ENCODE measurements at regions of chr4 and their contacts with region 1.

Region 1: DNA sequence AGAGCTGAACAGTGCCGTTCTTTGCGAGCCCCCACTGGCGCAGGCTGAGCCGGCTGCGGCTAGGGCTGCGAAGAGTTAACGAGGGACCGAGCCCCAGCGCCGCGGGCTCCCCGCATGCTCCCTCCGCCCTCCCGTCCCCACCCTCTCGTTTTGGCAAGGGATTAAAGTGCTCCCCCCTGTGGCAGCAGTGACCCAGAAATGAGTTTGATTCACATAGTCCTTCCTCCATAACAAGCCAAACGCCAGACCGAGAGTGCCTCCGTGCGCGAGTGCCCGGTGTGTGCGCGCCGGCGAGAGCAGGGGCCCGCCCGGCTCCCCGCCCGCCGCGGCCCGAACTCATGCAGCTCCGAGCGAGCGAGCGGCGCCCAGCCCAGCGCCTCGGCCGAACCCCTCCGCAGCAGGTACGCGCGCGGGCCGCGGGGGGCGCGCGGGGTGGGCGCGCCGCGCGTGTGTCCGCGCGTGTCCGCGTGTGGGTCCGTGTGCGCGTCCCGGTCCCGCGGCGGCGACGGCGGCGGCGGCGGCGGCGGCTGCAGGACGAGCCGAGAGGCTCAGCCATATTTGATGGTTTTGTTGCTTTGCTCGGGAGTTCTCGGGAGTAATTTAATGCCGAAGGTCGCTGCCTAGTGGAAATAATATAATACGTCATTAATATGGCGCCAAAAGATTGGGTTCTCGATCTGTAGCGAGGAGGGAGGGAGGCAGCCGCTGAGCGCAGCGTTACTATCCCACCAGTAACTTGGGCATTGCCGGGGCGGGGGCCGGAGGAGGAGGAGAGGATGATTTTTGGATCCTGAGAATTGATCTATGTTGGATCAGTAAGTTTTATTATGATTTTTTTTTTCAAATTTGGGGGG is at the start of gene JADE1:
- DNase-seq: peak; percentile 95
- ATAC-seq: peak; percentile 64
- H3K4me3 ChIP-seq: peak within 1 kb of the TSS; percentile 84
- H3K27ac ChIP-seq: peak within 1 kb of the TSS; percentile 95
- H3K4me1 ChIP-seq: no peaks in the 10 kb centered on the region
- H3K27me3 ChIP-seq: no peaks in the 10 kb centered on the region
- CTCF ChIP-seq: peak; percentile 93
- POLR2A ChIP-seq: peak; percentile 59
- RAD21 ChIP-seq: peak; percentile 85
- total RNA-seq, gene JADE1: 32.6 and 32.8 TPM in 2 replicates

Region 2: DNA sequence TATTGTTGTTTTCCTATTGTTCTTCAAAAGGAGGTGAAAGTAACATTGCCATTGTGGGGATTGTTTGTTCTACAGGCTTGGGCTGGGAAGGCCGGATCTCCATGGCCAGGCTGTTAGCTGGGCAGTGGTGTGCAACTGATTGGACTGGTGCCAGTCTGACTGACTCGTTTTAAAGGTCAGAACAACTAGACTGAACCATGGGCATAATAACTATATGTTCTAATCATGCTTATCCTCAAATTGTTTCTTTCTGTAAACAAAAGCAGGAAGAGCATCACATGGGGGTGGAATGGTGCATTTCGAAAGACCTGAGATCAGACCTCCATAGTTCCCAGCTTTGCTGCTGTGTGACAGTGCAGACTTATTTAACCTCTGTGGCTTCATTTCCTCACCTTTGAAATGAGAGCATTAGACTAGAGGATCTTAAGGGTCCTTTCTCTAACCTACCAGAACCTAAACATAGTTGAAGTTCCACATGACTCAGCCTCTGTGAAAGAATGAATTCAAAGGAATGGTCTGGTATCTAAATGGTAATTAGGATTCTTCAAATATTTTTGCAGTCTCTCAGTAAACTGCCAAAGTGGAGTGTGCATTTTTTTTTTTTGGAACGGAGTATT is 455.4 kb before region 1 on chr4:
- CTCF ChIA-PET with region 1: no interaction called
- POLR2A ChIA-PET with region 1: no interaction called
- dilution Hi-C with region 1: no loop called
- in situ Hi-C with region 1: no loop called
- intact Hi-C with region 1: loop called (anchors 2 kb)
- DNase-seq: peak; percentile 97
- ATAC-seq: peak; percentile 71
- H3K4me3 ChIP-seq: no peak overlapping the region
- H3K27ac ChIP-seq: peak overlapping the region; percentile 99
- H3K4me1 ChIP-seq: peaks cover 41% of the 10 kb centered on the region
- H3K27me3 ChIP-seq: no peaks in the 10 kb centered on the region
- CTCF ChIP-seq: no peak
- POLR2A ChIP-seq: no peak
- RAD21 ChIP-seq: no peak

Region 3: GRCh38 chr4:128461291-128462102 is 348.2 kb before region 1 on chr4:
- CTCF ChIA-PET with region 1: no interaction called
- POLR2A ChIA-PET with region 1: no interaction called
- dilution Hi-C with region 1: no loop called
- in situ Hi-C with region 1: loop called (anchors 5 kb)
- intact Hi-C with region 1: no loop called
- DNase-seq: peak; percentile 88
- ATAC-seq: peak; percentile 98
- H3K4me3 ChIP-seq: no peak overlapping the region
- H3K27ac ChIP-seq: peak overlapping the region; percentile 28; the same call in 1 of the 2 replicates
- H3K4me1 ChIP-seq: peaks cover 4% of the 10 kb centered on the region; the same call in 1 of the 2 replicates
- H3K27me3 ChIP-seq: no peaks in the 10 kb centered on the region
- CTCF ChIP-seq: no peak
- POLR2A ChIP-seq: no peak
- RAD21 ChIP-seq: no peak

Region 4: DNA sequence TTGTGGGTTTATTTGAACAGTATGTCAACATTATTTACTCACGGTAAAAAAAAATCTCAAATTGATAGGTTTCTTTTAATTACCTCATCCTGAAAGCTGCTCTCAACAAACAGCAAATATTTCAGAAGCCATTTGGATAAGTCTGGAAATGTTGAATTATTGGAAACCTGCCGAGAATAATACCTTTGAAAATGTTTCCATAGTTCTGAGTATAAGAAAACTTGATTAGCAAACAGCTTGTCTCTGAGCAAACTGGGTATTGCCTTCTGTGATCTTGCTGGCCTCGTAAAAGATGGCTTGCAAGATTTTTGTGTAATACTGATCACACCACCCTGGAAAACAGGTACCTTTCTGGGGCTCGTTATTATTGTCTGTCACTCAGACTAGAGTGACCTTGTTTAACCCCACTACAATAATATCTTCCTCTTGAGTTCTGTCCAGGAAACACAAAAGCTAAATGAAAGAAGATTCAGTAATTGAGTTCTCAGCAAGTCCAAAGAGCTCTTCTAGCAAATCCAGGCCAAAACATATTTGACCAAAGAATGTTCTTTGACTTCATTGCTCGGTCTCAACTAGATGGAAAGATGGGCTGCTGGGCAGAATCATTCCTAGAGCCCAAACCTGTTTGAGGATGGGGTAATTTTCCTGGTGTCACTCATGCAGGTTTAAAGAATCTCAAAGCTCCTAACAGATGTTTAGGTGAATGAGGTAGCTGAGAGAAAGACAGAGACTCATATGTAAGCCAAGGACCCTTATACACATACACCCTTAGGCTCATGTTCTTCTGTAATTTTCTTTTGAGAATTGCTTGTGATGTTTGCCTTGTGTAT is 255.8 kb before region 1 on chr4:
- CTCF ChIA-PET with region 1: no interaction called
- POLR2A ChIA-PET with region 1: interaction called, 3 read pairs
- dilution Hi-C with region 1: no loop called
- in situ Hi-C with region 1: no loop called
- intact Hi-C with region 1: loop called (anchors 1 kb)
- DNase-seq: no peak
- ATAC-seq: no peak; the same call in 1 of the 2 replicates
- H3K4me3 ChIP-seq: peak overlapping the region; percentile 53; the same call in 1 of the 2 replicates
- H3K27ac ChIP-seq: peak overlapping the region; percentile 88; the same call in 1 of the 2 replicates
- H3K4me1 ChIP-seq: peaks cover 14% of the 10 kb centered on the region
- H3K27me3 ChIP-seq: no peaks in the 10 kb centered on the region
- CTCF ChIP-seq: no peak
- POLR2A ChIP-seq: no peak
- RAD21 ChIP-seq: no peak

Region 5: GRCh38 chr4:128863312-128864075 is 53.8 kb after region 1 on chr4:
- CTCF ChIA-PET with region 1: no interaction called
- POLR2A ChIA-PET with region 1: no interaction called
- dilution Hi-C with region 1: no loop called
- in situ Hi-C with region 1: loop called (anchors 5 kb)
- intact Hi-C with region 1: loop called (anchors 1 kb)
- DNase-seq: peak; percentile 80
- ATAC-seq: peak; percentile 65; the same call in 1 of the 2 replicates
- H3K4me3 ChIP-seq: no peak overlapping the region
- H3K27ac ChIP-seq: 0 out of 2 replicates have a peak overlapping the region, but pooled peaks have one; percentile 0
- H3K4me1 ChIP-seq: peaks cover 24% of the 10 kb centered on the region
- H3K27me3 ChIP-seq: no peaks in the 10 kb centered on the region
- CTCF ChIP-seq: peak; percentile 79
- POLR2A ChIP-seq: no peak
- RAD21 ChIP-seq: peak; percentile 78

Region 6: DNA sequence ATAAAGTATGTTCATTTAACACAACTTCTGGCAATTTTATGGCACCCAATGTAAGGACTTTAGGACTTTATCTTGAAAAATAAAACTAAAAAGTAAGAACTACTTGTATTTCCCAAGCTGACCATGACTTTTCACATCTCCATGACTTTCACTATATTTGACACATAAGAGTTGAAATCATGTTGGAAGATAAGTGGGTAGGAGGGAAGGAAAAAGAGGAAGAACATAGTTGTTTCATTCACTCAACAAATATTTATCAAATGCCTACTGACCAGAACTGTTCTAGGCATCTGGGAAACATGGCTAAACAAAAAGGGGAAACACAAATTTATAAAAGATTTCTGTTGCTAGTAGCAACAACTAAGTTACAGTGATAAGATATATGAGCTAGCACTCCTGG is 267.6 kb after region 1 on chr4:
- CTCF ChIA-PET with region 1: no interaction called
- POLR2A ChIA-PET with region 1: no interaction called
- dilution Hi-C with region 1: no loop called
- in situ Hi-C with region 1: no loop called
- intact Hi-C with region 1: no loop called
- DNase-seq: no peak
- ATAC-seq: no peak
- H3K4me3 ChIP-seq: no peak overlapping the region
- H3K27ac ChIP-seq: no peak overlapping the region
- H3K4me1 ChIP-seq: peaks cover 3% of the 10 kb centered on the region; the same call in 1 of the 2 replicates
- H3K27me3 ChIP-seq: no peaks in the 10 kb centered on the region
- CTCF ChIP-seq: no peak
- POLR2A ChIP-seq: no peak
- RAD21 ChIP-seq: no peak

Region 7: DNA sequence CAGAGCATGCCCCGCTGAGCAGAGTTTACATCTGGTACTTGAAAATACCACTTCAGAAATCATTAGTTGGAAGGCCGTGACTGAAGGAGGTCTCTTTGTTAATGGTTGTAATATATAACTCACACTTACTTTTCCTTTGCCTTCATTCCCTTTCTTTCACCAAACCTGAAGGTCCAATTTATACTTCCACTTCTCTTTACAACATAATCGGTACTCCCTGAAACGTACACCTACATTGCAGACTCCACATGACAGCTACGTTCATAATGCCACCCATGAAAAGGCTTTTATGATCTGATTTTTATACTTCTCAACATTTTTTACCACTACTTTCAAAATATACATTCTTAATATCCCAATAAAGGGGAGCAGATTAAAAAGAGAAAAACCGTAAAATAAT is 584.9 kb after region 1 on chr4:
- CTCF ChIA-PET with region 1: no interaction called
- POLR2A ChIA-PET with region 1: no interaction called
- dilution Hi-C with region 1: no loop called
- in situ Hi-C with region 1: no loop called
- intact Hi-C with region 1: no loop called
- DNase-seq: no peak
- ATAC-seq: no peak
- H3K4me3 ChIP-seq: no peak overlapping the region
- H3K27ac ChIP-seq: no peak overlapping the region
- H3K4me1 ChIP-seq: no peaks in the 10 kb centered on the region
- H3K27me3 ChIP-seq: no peaks in the 10 kb centered on the region
- CTCF ChIP-seq: no peak
- POLR2A ChIP-seq: no peak
- RAD21 ChIP-seq: no peak

Measured in IMR-90 (cell line).